SK-N-SH (cell line): ENCODE measurements at regions of chr3 and their contacts with region 1.

Region 1: DNA sequence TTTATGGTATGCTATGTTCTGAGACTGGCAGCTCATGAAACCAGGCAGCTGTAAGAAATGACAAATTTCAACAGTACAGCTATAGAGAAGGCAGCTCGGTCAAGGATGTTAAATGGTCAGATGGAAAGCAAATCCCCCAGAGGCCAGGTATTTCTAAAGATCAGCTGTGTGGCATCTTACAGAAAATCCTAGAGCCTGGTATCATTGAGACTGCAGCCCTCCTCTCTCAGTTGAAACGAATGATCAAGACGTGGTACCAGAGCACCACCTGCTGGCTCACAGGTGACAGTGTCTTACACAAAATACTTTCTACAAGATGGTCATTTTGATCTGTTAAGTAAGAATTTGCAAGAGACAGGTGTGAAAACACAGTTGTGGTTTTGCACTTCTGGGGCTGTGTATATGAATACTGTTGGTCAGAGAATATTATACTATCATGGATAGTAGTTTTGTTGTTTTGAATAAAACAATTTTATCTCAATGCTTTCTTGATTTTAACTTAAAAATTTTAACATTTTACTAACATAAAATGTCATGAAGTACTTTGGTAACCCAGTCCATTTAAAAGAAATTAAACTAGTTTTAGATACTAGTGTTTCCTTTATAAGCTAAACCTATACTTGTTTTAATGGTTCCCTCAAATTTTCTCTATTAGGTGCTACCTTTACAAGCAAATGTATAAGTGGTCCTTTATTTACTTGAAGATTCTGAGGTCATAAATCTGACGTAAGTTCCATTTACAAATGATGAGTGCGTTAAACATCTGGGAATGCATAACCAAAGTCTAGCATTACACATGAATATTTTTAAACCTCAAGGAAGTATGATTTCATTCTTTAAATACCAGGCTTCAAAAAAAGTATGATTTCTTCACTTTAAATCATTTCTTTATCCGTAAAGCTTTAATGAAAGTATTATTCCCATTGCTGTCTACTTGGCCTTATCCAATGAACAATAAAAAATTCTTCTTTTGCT is 121.8 kb downstream of the PDZRN3 start:
- DNase-seq: peak; percentile 80
- H3K4me3 ChIP-seq: no peak overlapping the region; a peak in 1 of 4 replicates
- H3K27ac ChIP-seq: peak overlapping the region; percentile 66 to 71
- H3K4me1 ChIP-seq: peaks cover 8 to 19% of the 10 kb centered on the region in 2 experiments; a peak in 3 of 4 replicates
- H3K27me3 ChIP-seq: no peaks in the 10 kb centered on the region
- CTCF ChIP-seq: peak; percentile 89
- EP300 ChIP-seq: peak; percentile 26 to 61; a peak in 2 of 4 replicates
- RAD21 ChIP-seq: peak; percentile 99

Region 2: DNA sequence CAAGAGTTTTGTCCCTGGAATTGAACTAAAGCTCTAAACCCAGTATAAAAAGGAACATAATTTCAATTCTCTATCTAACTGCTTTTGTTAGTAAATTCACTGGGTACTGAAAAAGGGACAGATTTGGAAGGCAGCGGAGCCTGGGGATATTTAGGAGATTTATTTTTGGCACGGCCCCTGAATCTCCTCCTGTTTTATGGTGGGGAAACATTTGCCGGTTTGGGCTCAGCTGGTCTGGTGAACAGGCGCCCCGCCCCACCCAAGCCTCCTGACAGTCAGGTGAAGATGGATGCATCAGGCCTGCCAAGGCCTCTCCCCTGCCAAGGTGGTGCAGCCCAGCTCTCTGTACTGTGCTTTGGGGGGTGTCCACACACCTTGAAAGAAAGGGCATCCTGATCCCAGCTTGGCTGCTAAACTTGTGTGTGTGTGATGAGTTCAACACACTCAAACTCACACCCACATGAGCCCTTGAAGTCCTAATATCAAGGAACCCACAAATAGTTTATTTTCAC is 395.2 kb before region 1 on chr3:
- CTCF ChIA-PET with region 1: interaction called, 104 read pairs
- POLR2A ChIA-PET with region 1: no interaction called
- DNase-seq: no peak
- H3K4me3 ChIP-seq: no peak overlapping the region
- H3K27ac ChIP-seq: no peak overlapping the region
- H3K4me1 ChIP-seq: no peaks in the 10 kb centered on the region; a peak in 1 of 4 replicates
- H3K27me3 ChIP-seq: no peaks in the 10 kb centered on the region
- CTCF ChIP-seq: no peak
- EP300 ChIP-seq: no peak
- RAD21 ChIP-seq: no peak

Region 3: DNA sequence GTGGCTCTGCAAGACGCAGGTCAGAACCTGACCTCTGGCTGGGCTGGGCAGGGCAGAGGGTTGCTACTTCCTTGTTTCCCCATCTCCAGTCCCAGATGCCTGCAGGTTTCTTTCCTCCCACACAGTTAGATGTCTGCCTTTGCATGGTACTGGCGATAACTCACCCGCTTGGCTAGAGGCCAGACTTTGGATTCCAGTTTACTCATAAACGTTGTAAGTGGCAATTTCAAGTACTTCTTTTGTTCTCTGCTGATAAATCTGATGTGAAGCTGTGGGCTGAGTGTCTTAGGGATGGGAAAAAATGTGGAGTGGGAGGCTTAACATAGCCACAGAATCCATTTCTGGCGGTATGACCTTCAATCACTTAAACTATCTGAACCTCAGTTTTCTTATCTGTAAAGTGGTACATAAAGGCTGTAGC is 247.3 kb before region 1 on chr3:
- CTCF ChIA-PET with region 1: no interaction called
- POLR2A ChIA-PET with region 1: no interaction called
- DNase-seq: peak; percentile 25
- H3K4me3 ChIP-seq: no peak overlapping the region
- H3K27ac ChIP-seq: no peak overlapping the region
- H3K4me1 ChIP-seq: peaks cover 0 to 8% of the 10 kb centered on the region in 2 experiments; a peak in 1 of 4 replicates
- H3K27me3 ChIP-seq: no peaks in the 10 kb centered on the region
- CTCF ChIP-seq: no peak
- EP300 ChIP-seq: 0 out of 4 replicates have a peak, but pooled peaks of 1 of the 2 experiments have one; percentile 7
- RAD21 ChIP-seq: no peak

Region 4: DNA sequence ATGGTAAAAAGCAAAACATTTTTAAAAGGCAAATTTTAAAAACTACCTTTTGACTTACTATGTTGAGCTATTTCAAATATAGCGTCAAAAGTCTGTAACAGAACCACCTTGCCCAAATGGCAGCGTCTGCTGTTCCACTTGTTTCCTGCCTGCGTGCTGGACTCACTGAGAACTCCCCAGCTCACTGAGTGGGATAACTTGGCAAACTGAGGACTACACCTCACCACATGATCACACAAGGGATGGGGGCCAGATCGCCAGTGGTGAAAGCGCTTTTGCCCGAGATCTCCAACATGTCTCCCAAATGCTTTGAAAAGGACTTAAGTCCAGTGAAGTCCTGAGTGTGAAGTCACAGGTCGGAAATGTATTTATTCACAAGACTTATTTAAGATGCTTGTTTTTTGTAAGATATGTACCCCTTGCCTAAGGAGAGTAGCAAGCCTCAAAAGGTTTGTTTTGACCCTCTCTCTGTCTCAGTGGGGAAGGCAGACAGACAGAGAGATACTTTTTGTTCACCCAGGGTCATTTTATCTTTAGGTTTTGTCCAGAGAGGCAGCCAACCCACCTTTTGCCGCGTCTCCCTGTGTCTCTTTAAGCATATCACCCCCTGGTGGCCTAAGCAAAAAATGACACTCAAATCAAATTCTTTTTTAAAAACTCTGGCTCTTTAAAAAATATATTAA is 70.7 kb before region 1 on chr3:
- CTCF ChIA-PET with region 1: interaction called, 18 read pairs
- POLR2A ChIA-PET with region 1: no interaction called
- DNase-seq: peak; percentile 68
- H3K4me3 ChIP-seq: peak overlapping the region in 1 of 2 experiments; percentile 38; a peak in 2 of 4 replicates
- H3K27ac ChIP-seq: peak overlapping the region in 1 of 2 experiments; percentile 94; a peak in 2 of 4 replicates
- H3K4me1 ChIP-seq: peaks cover 0 to 54% of the 10 kb centered on the region in 2 experiments; a peak in 2 of 4 replicates
- H3K27me3 ChIP-seq: no peaks in the 10 kb centered on the region
- CTCF ChIP-seq: peak; percentile 85
- EP300 ChIP-seq: no peak
- RAD21 ChIP-seq: peak; percentile 81

Region 5: DNA sequence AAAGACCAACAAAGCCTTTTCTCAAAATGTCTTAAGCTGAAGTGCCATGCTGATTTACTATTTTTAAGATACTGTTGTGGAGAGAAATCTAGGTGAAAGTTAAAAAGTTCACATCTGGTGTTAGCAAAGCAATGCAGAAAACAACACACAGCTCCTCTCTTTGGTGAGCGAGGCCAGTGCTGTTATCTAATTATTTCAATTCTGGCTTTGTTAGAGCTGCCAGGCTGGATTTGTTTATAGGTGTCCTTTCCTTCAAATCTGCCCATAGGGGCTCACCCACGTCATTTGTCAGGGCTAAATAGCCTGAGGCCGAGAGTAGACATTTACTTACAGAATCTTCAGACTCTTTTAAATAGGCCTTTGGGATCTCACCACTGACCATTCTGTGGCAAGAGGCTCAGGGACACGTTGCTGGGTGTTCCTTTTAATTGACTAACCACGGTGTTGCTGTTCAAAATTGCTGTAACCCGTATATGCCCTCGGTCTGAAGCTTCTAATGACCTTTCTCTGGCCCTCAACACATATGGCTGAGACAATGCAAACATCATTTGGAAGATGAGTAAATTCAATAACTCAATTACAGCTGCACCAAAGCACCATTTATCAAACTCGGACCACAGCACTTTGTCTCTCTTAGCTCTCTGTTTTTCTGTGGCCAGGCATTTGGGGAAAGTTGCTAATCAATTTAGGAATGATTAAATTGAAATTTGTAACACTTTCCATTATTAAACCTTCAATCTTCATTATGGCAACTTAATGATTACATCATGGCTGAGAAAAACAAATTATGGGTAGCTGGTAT is 30.7 kb before region 1 on chr3:
- CTCF ChIA-PET with region 1: interaction called, 60 read pairs
- POLR2A ChIA-PET with region 1: no interaction called
- DNase-seq: peak; percentile 45
- H3K4me3 ChIP-seq: no peak overlapping the region
- H3K27ac ChIP-seq: peak overlapping the region in 1 of 2 experiments; percentile 99; a peak in 2 of 4 replicates
- H3K4me1 ChIP-seq: peaks cover 0 to 47% of the 10 kb centered on the region in 2 experiments; a peak in 2 of 4 replicates
- H3K27me3 ChIP-seq: no peaks in the 10 kb centered on the region
- CTCF ChIP-seq: no peak
- EP300 ChIP-seq: peak in 1 of 2 experiments; percentile 93; a peak in 2 of 4 replicates
- RAD21 ChIP-seq: peak; percentile 18; the same call in 1 of the 2 replicates

Region 6: DNA sequence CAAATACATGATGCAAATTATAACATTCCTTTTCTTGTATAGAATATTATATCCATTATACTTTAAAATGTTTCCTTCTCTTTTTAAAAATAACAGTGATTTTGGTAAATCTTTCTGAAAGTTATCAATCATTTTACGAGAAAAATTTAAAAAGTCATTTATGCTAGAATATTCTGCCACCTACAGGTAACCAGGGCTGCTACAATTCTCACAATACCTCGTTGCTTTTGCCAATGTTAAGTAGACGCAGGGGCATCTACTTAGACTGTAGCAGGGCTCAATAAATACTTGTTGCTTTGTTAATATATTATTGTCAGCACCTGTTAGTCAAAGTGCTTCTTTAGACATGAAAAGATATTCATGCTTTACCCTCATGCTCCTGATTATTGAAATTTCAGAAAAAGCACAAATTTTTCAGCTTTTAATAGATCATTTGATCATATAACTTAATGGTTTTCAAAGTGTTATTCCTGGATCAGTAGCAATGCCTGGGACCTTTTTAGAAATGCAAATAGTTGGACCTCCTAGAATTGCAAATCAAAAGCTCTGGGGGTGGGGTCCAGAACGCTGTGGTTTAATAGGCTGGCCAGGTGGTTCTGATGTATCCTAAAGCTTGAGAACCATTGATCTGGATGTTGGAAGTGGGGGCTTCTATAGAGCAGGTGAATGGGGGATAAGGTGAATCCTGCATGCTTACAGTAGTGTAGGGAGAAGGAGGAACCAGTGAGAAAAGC is 345.4 kb after region 1 on chr3:
- CTCF ChIA-PET with region 1: interaction called, 75 read pairs
- POLR2A ChIA-PET with region 1: no interaction called
- DNase-seq: peak; percentile 48
- H3K4me3 ChIP-seq: no peak overlapping the region; a peak in 1 of 4 replicates
- H3K27ac ChIP-seq: no peak overlapping the region
- H3K4me1 ChIP-seq: no peaks in the 10 kb centered on the region
- H3K27me3 ChIP-seq: no peaks in the 10 kb centered on the region
- CTCF ChIP-seq: peak; percentile 94
- EP300 ChIP-seq: no peak
- RAD21 ChIP-seq: peak; percentile 87